CD4-positive, alpha-beta T cell (primary cell): ENCODE measurements at regions of chr3 and their contacts with region 1.

Region 1: DNA sequence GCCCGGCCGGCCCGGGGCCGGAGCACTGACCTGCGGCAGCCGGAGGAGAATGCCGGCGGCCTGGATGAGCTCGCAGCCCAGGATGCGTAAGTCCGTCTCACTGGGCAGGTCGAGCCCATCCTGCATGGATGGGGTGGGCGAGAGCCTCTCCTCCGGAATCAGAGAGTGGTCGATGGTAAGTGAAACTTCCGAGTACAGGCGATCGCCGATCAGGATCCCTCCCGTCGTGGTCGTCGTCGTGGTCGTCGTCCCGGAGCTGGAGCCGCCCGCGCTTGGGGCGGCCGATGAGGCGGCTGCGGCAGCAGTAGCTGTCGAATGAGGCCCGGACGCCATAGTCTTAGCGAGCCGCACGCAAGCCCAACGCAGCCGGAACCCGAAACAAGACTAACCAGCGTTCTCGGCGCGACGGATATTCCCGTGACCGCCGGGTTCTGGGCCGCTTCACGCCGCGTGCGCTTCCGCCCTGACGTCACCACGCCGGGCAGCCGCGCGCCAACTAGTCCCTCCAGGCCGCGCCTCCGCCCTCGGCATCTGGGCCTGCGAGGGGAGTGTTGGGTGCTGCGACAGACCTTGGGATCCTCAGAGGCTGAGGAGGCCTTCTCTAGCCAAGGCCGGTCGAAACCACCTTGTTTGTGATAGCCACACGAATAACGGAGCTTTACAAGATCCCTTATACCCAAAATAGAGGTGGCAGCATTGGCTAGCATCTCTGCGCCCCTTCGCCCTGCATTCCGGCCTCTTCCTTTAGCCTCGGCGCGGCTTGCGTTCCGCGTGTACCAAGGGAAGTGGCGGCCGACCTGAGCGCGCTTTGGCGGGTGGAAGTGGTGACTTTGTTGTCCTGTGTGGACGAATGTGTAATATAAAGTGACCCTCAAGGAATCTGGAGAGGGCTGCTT is at the start of gene CCNL1:
- DNase-seq: peak; percentile 93 to 100 (median 96)
- ATAC-seq: peak; percentile 67
- H3K4me3 ChIP-seq: peak within 1 kb of the TSS; percentile 95
- H3K4me3 Mint-ChIP-seq: peak within 1 kb of the TSS; percentile 95
- H3K27ac ChIP-seq: peak within 1 kb of the TSS; percentile 99 to 100
- H3K27ac Mint-ChIP-seq: peak within 1 kb of the TSS; percentile 100
- H3K4me1 ChIP-seq: peaks cover 22% of the 10 kb centered on the region
- H3K4me1 Mint-ChIP-seq: peaks cover 67% of the 10 kb centered on the region
- H3K27me3 ChIP-seq: no peaks in the 10 kb centered on the region
- H3K27me3 Mint-ChIP-seq: no peaks in the 10 kb centered on the region
- CTCF ChIP-seq: no peak
- total RNA-seq, gene CCNL1: 1,350 to 1,388 TPM

Region 2: DNA sequence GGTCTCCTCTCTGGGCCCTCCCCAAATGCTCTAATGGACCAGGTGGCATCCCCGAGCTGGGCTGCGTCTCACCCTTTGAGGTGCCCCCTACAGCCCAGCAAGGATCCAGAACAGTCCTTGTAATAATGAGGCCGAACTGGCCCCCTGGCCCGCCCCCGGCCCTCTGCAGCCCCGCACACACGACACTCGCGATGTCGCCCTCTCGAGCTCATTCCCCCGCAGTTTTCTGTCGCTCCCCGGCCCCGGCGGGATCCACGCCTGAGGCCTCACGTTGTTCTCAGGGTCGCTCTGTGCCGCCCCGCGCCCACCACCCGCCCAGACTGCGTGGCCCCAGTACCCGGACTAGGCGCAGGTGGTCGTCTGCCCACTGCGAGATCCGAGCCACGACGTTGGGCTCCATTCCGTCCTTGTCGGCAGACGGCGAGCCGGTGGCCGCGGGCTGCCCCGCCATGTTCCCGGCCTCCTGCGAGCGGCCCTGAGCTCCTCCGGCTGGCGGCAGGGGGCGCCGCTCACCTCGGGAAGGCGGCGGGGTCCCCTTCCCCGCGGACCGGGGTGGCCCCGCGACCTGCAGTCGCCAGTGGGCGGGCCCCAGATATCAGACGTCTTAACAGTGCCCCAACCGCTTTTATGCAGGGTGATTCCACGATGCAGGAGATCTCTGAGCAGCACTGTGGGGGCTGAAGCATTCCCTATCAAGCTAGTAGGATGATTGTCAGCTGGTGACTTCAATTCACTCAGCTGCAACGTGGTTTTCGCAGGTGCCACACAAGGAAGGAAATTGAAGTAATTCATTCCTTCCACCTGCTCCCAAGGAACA is 1354.0 kb before region 1 on chr3 and contains the start of gene C3orf33:
- CTCF ChIA-PET with region 1: no interaction called
- POLR2A ChIA-PET with region 1: interaction called, 13 read pairs
- intact Hi-C with region 1: no loop called
- DNase-seq: peak; percentile 46 to 90 (median 71)
- ATAC-seq: peak; percentile 95
- H3K4me3 ChIP-seq: peak within 1 kb of the TSS; percentile 90
- H3K4me3 Mint-ChIP-seq: peak within 1 kb of the TSS; percentile 89
- H3K27ac ChIP-seq: peak within 1 kb of the TSS; percentile 46 to 61
- H3K27ac Mint-ChIP-seq: peak within 1 kb of the TSS; percentile 80
- H3K4me1 ChIP-seq: peaks cover 13% of the 10 kb centered on the region
- H3K4me1 Mint-ChIP-seq: peaks cover 17% of the 10 kb centered on the region
- H3K27me3 ChIP-seq: no peaks in the 10 kb centered on the region
- H3K27me3 Mint-ChIP-seq: peaks cover 6% of the 10 kb centered on the region
- CTCF ChIP-seq: peak; percentile 98
- total RNA-seq, gene C3orf33: 2.4 to 2.6 TPM

Region 3: GRCh38 chr3:156483961-156484787 is 675.8 kb before region 1 on chr3:
- CTCF ChIA-PET with region 1: no interaction called
- POLR2A ChIA-PET with region 1: interaction called, 19 read pairs
- intact Hi-C with region 1: no loop called
- DNase-seq: peak; percentile 10 to 86 (median 36)
- ATAC-seq: peak; percentile 84
- H3K4me3 ChIP-seq: peak overlapping the region; percentile 31
- H3K4me3 Mint-ChIP-seq: peak overlapping the region; percentile 20
- H3K27ac ChIP-seq: peak overlapping the region; percentile 66 to 75
- H3K27ac Mint-ChIP-seq: peak overlapping the region; percentile 80
- H3K4me1 ChIP-seq: peaks cover 16% of the 10 kb centered on the region
- H3K4me1 Mint-ChIP-seq: peaks cover 40% of the 10 kb centered on the region
- H3K27me3 ChIP-seq: no peaks in the 10 kb centered on the region
- H3K27me3 Mint-ChIP-seq: no peaks in the 10 kb centered on the region
- CTCF ChIP-seq: no peak

Region 4: DNA sequence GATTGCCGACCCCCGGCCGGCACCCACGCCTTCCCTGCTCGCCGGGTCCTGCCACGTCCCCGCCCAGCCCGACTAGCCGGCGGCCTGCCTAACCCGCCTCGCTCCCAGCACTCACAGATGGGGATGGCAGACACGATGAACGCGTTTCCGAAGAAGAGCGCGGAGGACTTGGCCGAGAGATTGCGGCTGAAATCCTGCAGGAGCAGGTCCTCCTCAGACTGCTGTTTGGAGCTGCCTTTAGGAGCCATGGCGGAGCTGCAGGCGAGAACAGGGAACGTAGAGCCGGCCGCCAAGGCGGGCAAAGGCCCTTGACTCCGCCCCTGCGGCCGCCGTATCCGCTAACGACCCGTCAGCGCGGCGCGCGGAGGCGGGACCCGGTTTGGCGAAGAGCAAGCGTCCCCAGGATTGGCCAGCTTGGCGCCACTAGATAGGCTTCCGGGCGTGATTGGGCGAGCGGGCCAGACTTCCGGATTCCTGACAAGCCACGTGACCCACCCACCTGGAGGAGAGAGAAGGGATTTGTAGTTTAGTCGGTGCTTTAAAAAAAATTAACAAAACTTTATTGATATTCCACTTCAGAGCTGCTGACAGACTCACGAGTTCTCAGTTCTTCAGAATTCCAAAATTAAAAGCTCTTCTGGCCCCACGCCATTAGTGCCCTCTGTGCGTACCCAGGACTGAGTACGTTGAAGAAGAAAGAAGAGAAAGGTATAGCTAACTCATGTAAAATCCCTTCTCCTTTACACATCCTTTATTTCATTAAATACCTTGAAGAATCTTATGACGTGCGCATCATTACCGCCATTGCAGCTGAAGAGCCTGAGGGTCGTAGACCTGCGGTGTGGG is 604.9 kb before region 1 on chr3 and contains the start of gene SSR3:
- CTCF ChIA-PET with region 1: no interaction called
- POLR2A ChIA-PET with region 1: interaction called, 42 read pairs
- intact Hi-C with region 1: loop called in 1 of 2 experiments (anchors 1 kb)
- DNase-seq: peak; percentile 95 to 100 (median 98)
- ATAC-seq: peak; percentile 98
- H3K4me3 ChIP-seq: peak within 1 kb of the TSS; percentile 65
- H3K4me3 Mint-ChIP-seq: peak within 1 kb of the TSS; percentile 97
- H3K27ac ChIP-seq: peak within 1 kb of the TSS; percentile 48 to 76
- H3K27ac Mint-ChIP-seq: peak within 1 kb of the TSS; percentile 90
- H3K4me1 ChIP-seq: peaks cover 19% of the 10 kb centered on the region
- H3K4me1 Mint-ChIP-seq: peaks cover 52% of the 10 kb centered on the region
- H3K27me3 ChIP-seq: no peaks in the 10 kb centered on the region
- H3K27me3 Mint-ChIP-seq: peaks cover 5% of the 10 kb centered on the region
- CTCF ChIP-seq: no peak
- total RNA-seq, gene SSR3: 78.8 to 79.5 TPM

Region 5: GRCh38 chr3:157130467-157131251 is 29.4 kb before region 1 on chr3:
- CTCF ChIA-PET with region 1: interaction called, 4 read pairs
- POLR2A ChIA-PET with region 1: interaction called, 18 read pairs
- intact Hi-C with region 1: no loop called
- DNase-seq: peak; percentile 57 to 94 (median 80)
- ATAC-seq: peak; percentile 69
- H3K4me3 ChIP-seq: peak overlapping the region; percentile 28
- H3K4me3 Mint-ChIP-seq: peak overlapping the region; percentile 80
- H3K27ac ChIP-seq: peak overlapping the region; percentile 80 to 92
- H3K27ac Mint-ChIP-seq: peak overlapping the region; percentile 98
- H3K4me1 ChIP-seq: peaks cover 80% of the 10 kb centered on the region
- H3K4me1 Mint-ChIP-seq: peaks cover 59% of the 10 kb centered on the region
- H3K27me3 ChIP-seq: no peaks in the 10 kb centered on the region
- H3K27me3 Mint-ChIP-seq: no peaks in the 10 kb centered on the region
- CTCF ChIP-seq: peak; percentile 87

Region 6: GRCh38 chr3:157148196-157148889 is 11.7 kb before region 1 on chr3:
- CTCF ChIA-PET with region 1: interaction called, 7 read pairs
- POLR2A ChIA-PET with region 1: interaction called, 44 read pairs
- intact Hi-C with region 1: no loop called
- DNase-seq: peak in 1 of 14 experiments; percentile 22
- ATAC-seq: peak; percentile 32
- H3K4me3 ChIP-seq: no peak overlapping the region
- H3K4me3 Mint-ChIP-seq: no peak overlapping the region
- H3K27ac ChIP-seq: no peak overlapping the region
- H3K27ac Mint-ChIP-seq: peak overlapping the region; percentile 81
- H3K4me1 ChIP-seq: no peaks in the 10 kb centered on the region
- H3K4me1 Mint-ChIP-seq: peaks cover 58% of the 10 kb centered on the region
- H3K27me3 ChIP-seq: no peaks in the 10 kb centered on the region
- H3K27me3 Mint-ChIP-seq: no peaks in the 10 kb centered on the region
- CTCF ChIP-seq: no peak

Region 7: DNA sequence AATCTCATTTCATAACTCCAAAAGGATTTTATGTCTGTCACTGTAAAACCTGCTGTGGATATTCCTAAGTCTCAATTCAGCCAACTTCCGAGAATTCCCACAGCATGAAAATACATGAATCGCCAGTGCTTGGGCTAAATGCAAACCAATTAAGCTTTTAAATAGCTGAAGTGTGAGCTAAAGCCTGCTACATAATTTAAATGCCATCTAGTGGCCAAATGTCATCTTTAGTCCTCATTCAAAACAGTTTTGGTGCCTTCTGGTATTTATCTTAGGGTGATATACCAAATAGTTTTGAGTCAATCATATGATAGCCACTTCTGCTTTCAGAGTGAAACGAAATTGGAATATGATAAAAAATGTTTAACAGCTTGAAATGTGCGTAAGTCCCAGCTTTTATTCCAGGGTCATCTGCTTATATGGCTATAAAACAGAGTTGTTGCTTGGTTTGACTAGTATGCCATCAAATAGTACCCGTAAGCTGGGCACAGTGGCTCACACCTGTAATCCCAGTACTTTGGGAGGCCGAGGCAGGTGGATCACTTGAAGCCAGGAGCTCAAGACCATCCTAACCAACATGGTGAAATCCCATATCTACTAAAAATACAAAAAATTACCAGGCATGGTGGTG is 41.8 kb after region 1 on chr3:
- CTCF ChIA-PET with region 1: interaction called, 3 read pairs
- POLR2A ChIA-PET with region 1: interaction called, 18 read pairs
- intact Hi-C with region 1: no loop called
- DNase-seq: peak in 3 of 14 experiments; percentile 34 to 57 (median 56)
- ATAC-seq: no peak
- H3K4me3 ChIP-seq: no peak overlapping the region
- H3K4me3 Mint-ChIP-seq: no peak overlapping the region
- H3K27ac ChIP-seq: no peak overlapping the region
- H3K27ac Mint-ChIP-seq: no peak overlapping the region
- H3K4me1 ChIP-seq: no peaks in the 10 kb centered on the region
- H3K4me1 Mint-ChIP-seq: peaks cover 5% of the 10 kb centered on the region
- H3K27me3 ChIP-seq: no peaks in the 10 kb centered on the region
- H3K27me3 Mint-ChIP-seq: no peaks in the 10 kb centered on the region
- CTCF ChIP-seq: peak; percentile 67